A673 (cell line): ENCODE measurements at regions of chr17 and their contacts with region 1.

Region 1: GRCh38 chr17:65100316-65101140 is 36.6 kb upstream of the RGS9 start:
- DNase-seq: peak; percentile 77
- H3K4me3 ChIP-seq: peak overlapping the region; percentile 50
- H3K27ac ChIP-seq: no peak overlapping the region
- H3K4me1 ChIP-seq: no peaks in the 10 kb centered on the region
- H3K27me3 ChIP-seq: no peaks in the 10 kb centered on the region
- CTCF ChIP-seq: peak; percentile 84

Region 2: DNA sequence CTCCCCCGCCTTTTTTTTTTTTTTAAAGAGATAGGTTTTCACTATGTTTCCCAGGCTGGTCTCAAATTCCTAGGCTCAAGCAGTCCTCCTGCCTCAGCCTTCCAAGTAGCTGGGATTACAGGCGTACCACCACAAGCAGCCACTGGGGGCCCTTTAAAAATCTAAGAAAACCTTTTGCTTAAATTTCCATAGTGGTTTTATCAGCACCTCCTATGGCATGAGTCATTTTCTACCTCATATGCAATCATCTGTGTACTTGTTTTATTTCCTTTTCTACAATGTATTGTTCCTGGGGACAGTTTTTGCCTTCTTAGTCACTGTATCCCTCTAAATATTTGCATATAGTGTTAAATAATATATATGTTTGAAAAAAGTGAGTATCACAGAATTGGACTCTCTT is 73.2 kb before region 1 on chr17:
- CTCF ChIA-PET with region 1: interaction called, 14 read pairs
- POLR2A ChIA-PET with region 1: no interaction called
- intact Hi-C with region 1: no loop called
- DNase-seq: peak; percentile 69
- H3K4me3 ChIP-seq: no peak overlapping the region
- H3K27ac ChIP-seq: no peak overlapping the region
- H3K4me1 ChIP-seq: peaks cover 33% of the 10 kb centered on the region
- H3K27me3 ChIP-seq: no peaks in the 10 kb centered on the region
- CTCF ChIP-seq: peak; percentile 55

Region 3: DNA sequence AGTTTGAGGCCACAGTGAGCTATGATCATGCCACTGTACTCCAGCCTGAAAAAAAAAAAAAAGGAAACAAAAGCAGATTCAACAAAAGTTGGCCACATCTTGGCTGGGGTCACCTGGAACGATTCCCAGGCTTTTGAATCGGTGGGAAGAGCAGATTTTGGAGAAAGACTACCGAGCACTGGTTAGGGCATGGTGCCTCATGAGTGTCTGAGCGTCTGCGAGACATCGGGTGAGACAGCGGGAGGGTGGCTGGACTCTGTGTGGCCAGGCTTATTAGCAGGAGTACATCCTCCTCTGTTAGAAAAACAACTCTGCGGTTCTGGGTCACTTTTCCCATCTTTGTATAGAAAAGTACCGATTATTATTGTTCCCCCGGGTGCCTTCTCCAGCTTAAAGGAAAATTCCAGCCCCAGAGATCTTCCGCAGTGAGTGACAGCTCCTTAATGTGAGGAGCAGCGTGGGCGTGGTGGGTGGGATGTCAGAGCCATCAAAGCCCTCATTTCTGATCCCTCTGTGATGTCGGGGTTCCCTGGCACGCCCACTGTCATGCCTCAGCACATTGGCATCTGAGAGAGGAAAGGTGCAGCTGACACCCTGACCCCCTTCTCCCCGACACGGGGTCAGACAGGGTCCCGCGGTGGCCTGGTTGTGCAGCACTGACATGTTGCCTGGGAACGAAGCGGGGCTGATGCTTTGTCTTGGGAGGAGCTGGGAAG is 43.5 kb after region 1 on chr17:
- CTCF ChIA-PET with region 1: interaction called, 14 read pairs
- POLR2A ChIA-PET with region 1: no interaction called
- intact Hi-C with region 1: no loop called
- DNase-seq: peak; percentile 18
- H3K4me3 ChIP-seq: no peak overlapping the region
- H3K27ac ChIP-seq: no peak overlapping the region
- H3K4me1 ChIP-seq: no peaks in the 10 kb centered on the region
- H3K27me3 ChIP-seq: peaks cover 10% of the 10 kb centered on the region
- CTCF ChIP-seq: no peak